ENCODE measurements at regions of chr18 and their contacts with region 1.

Region 1: DNA sequence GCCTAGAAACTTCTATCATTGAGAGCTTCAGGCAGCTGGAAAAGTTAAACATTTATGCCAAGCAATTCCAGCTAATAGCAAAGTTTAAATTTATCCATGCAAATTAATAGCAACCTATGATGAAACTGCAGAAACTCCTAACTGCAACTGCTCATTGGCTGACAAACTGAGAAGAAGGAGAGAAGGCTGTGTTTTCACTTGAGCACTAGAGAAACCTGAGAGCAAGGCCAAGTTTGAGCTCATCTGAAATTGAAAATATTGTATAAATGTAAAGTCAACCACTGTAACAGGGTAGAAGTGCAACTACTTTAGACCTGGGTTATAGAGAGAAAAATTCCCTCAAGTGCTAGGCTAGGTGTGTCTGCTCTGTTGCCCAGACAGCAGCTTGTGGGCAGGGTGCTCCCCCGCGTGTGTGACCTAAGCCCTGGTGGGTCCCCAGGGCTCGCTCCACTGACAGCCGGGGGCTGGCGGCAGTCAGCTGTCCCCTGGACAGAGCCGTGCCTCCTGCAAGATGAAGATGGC is 50.2 kb downstream of the CABYR start:
- DNase-seq: no peak
- H3K4me3 ChIP-seq: no peak overlapping the region
- H3K27ac ChIP-seq: no peak overlapping the region
- H3K4me1 ChIP-seq: peaks cover 0 to 7% of the 10 kb centered on the region in 2 donors
- H3K27me3 ChIP-seq: no peaks in the 10 kb centered on the region
- CTCF ChIP-seq: no peak
- POLR2A ChIP-seq: no peak

Region 2: GRCh38 chr18:23761941-23762340 is 427.1 kb before region 1 on chr18:
- intact Hi-C with region 1: no loop called
- DNase-seq: no peak
- H3K4me3 ChIP-seq: no peak overlapping the region
- H3K27ac ChIP-seq: no peak overlapping the region
- H3K4me1 ChIP-seq: no peaks in the 10 kb centered on the region
- H3K27me3 ChIP-seq: no peaks in the 10 kb centered on the region
- CTCF ChIP-seq: no peak
- POLR2A ChIP-seq: no peak

Region 3: GRCh38 chr18:24246143-24246542 is 57.1 kb after region 1 on chr18:
- intact Hi-C with region 1: loop called in 1 of 2 experiments (anchors 10 kb)
- DNase-seq: no peak
- H3K4me3 ChIP-seq: no peak overlapping the region
- H3K27ac ChIP-seq: no peak overlapping the region
- H3K4me1 ChIP-seq: peaks cover 0 to 9% of the 10 kb centered on the region in 2 donors
- H3K27me3 ChIP-seq: no peaks in the 10 kb centered on the region
- CTCF ChIP-seq: no peak
- POLR2A ChIP-seq: no peak

Region 4: GRCh38 chr18:24380163-24380747 is 191.2 kb after region 1 on chr18:
- intact Hi-C with region 1: no loop called
- DNase-seq: no peak
- H3K4me3 ChIP-seq: no peak overlapping the region
- H3K27ac ChIP-seq: no peak overlapping the region
- H3K4me1 ChIP-seq: peaks cover 7 to 10% of the 10 kb centered on the region in 2 donors
- H3K27me3 ChIP-seq: no peaks in the 10 kb centered on the region
- CTCF ChIP-seq: no peak
- POLR2A ChIP-seq: no peak

Measured in adrenal gland (tissue), 19 donors.